Astrocyte of the cerebellum (primary cell): ENCODE measurements at regions of chr14 and their contacts with region 1.

Region 1: GRCh38 chr14:56005191-56006053 is 112.8 kb upstream of the PELI2 start:
- DNase-seq: peak; percentile 77
- H3K4me3 ChIP-seq: peak overlapping the region; percentile 19
- CTCF ChIP-seq: no peak

Region 2: DNA sequence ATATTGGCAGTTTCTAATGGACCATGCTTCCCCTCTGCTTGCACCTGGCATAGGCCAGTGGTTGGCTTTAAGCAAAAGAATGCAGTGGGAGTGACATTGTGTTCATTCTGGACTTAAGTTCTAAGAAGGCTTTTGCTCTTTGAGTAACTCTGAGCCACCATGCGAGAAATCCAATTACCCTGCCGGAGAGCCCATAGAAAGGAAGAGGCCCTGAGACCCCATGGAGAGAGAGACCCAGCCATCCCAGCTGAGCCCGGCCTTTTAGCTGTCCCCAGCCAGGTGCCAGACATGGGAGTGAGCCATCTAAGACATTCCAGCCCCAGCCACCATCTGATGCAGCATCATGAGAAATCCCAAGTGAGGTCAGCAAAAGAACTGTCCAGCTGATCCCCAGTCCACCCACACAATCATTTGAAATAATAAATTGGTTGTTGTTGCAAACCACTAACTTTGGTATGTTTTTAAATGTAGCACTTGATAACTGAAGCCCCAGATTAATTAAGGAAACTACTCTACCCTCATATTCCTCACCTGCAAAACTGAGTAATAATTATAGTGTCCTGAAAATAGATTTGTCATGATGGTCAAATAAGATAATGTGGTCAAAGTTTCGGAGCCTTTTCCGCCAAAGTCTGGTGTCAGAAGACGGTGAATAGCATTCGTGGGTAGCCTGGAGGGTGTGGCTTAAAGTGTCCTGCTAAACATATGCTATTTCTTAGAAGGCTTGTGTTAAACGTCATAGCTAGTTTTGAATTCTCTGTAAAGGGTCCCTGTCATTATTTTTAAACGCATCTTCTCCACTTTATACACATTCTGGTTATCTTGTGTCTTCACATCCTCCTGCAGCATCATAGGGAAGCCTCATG is 53.8 kb before region 1 on chr14:
- in situ Hi-C with region 1: loop called (anchors 5 kb)
- DNase-seq: no peak
- H3K4me3 ChIP-seq: no peak overlapping the region
- CTCF ChIP-seq: no peak

Region 3: GRCh38 chr14:56081139-56081538 is 75.7 kb after region 1 on chr14:
- in situ Hi-C with region 1: no loop called
- DNase-seq: no peak
- H3K4me3 ChIP-seq: no peak overlapping the region
- CTCF ChIP-seq: no peak